WTC11 (cell line): ENCODE measurements at regions of chr19 and their contacts with region 1.

Region 1: GRCh38 chr19:40598121-40598917 is 2.9 kb upstream of the LTBP4 start:
- DNase-seq: peak; percentile 93
- ATAC-seq: peak; percentile 32
- H3K4me3 Mint-ChIP-seq: peak overlapping the region; percentile 76
- H3K27ac Mint-ChIP-seq: peak overlapping the region; percentile 82; the same call in 1 of the 2 replicates
- H3K4me1 Mint-ChIP-seq: peaks cover 44% of the 10 kb centered on the region
- H3K27me3 Mint-ChIP-seq: peaks cover 82% of the 10 kb centered on the region
- CTCF ChIP-seq: peak; percentile 99

Region 2: DNA sequence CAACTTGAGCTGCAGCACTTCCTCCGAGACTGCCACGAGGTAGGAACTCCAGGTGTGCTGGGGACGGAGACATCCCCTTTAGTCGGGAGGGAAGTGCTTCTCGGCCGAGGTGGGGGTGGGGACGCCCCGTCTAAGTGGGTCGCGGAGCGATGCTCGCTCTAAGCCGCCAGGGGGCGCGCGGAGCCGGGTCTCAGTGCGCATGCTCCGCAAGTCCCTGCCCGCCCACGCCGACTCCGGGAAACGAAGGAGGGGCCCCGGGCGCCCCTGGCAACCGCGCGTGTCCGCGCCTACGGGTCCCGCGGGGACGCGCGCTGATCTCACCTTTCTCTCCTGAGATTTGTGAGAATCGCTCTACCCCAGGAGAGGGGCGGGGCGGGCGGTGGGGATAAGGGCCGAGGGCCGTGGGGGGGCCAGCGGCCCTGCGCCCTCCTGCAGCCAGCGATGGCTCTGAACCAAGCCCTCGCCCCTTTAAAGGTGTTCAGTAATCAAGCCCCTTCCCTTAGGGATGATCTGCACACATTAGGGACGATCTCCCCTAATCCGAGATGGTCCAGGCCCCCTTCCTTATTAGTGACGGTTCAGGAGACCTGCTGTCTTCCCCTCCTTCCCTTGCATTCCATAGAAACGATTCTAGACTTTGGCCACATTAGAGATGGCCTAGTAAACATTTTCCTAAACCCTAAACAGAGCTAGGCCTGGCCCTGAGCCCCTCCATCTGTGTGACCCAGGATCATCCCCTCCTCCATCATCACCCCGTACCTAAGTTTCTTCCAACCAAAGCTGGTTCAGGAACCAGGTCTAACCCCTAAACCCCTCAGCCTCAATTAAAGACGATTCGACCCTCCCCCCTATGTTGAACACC is 69.0 kb before region 1 on chr19:
- CTCF ChIA-PET with region 1: interaction called, 25 read pairs
- POLR2A ChIA-PET with region 1: no interaction called
- DNase-seq: peak; percentile 93
- ATAC-seq: peak; percentile 57
- H3K4me3 Mint-ChIP-seq: peak overlapping the region; percentile 67
- H3K27ac Mint-ChIP-seq: peak overlapping the region; percentile 68; the same call in 1 of the 2 replicates
- H3K4me1 Mint-ChIP-seq: peaks cover 16% of the 10 kb centered on the region
- H3K27me3 Mint-ChIP-seq: peaks cover 41% of the 10 kb centered on the region
- CTCF ChIP-seq: peak; percentile 99

Region 3: DNA sequence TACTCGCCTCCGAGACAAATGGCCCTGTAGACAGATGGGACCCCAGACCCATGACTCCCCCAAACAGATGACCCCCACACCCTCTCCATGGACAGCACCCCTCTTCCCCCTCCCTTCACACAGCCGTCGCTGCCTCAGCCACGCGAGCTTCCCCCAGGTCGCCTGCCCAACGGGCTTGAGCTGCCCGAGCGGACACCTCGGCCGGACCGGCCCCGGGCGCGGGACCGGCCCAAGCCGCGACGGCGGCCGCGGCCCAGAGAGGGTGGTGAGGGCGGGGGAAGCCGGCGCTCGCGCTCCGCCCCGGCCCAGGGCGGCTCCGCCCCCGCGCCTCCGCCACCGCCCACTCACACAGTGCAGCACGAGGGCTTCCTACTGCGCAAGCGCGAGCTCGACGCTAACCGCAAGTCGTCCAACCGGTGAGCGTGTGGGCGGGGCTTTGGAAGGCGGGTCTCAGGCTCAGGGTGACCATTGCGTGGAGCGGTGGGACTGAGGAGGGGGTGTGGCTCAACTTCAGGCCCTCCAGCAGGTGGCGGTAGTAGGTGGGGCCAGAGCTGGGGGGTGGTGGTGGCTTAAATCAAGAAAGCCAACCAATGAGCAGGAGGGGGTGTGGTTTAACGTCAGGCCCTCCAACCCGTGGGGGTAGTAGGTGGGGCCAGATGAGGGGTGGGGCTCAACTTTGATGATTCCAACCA is 27.9 kb before region 1 on chr19:
- CTCF ChIA-PET with region 1: interaction called, 69 read pairs
- POLR2A ChIA-PET with region 1: no interaction called
- DNase-seq: peak; percentile 100
- ATAC-seq: peak; percentile 96
- H3K4me3 Mint-ChIP-seq: peak overlapping the region; percentile 75
- H3K27ac Mint-ChIP-seq: no peak overlapping the region; the same call in 1 of the 2 replicates
- H3K4me1 Mint-ChIP-seq: peaks cover 15% of the 10 kb centered on the region
- H3K27me3 Mint-ChIP-seq: peaks cover 78% of the 10 kb centered on the region
- CTCF ChIP-seq: no peak

Region 4: GRCh38 chr19:40576585-40577451 is 21.5 kb before region 1 on chr19 and contains the start of gene SHKBP1:
- CTCF ChIA-PET with region 1: interaction called, 69 read pairs
- POLR2A ChIA-PET with region 1: interaction called, 4 read pairs
- DNase-seq: peak; percentile 96
- ATAC-seq: peak; percentile 89
- H3K4me3 Mint-ChIP-seq: peak within 1 kb of the TSS; percentile 93
- H3K27ac Mint-ChIP-seq: peak within 1 kb of the TSS; percentile 91
- H3K4me1 Mint-ChIP-seq: peaks cover 17% of the 10 kb centered on the region
- H3K27me3 Mint-ChIP-seq: peaks cover 21% of the 10 kb centered on the region
- CTCF ChIP-seq: no peak
- total RNA-seq, gene SHKBP1: 71.7 to 82.1 TPM (median 76.9 TPM) in 3 replicates

Region 5: GRCh38 chr19:40609561-40610395 is 11.5 kb after region 1 on chr19:
- CTCF ChIA-PET with region 1: interaction called, 94 read pairs
- POLR2A ChIA-PET with region 1: interaction called, 39 read pairs
- DNase-seq: peak; percentile 96
- ATAC-seq: peak; percentile 59
- H3K4me3 Mint-ChIP-seq: peak overlapping the region; percentile 73
- H3K27ac Mint-ChIP-seq: no peak overlapping the region
- H3K4me1 Mint-ChIP-seq: peaks cover 40% of the 10 kb centered on the region
- H3K27me3 Mint-ChIP-seq: peaks cover 81% of the 10 kb centered on the region
- CTCF ChIP-seq: no peak